PC-3 (cell line): ENCODE measurements at regions of chr17 and their contacts with region 1.

Region 1: DNA sequence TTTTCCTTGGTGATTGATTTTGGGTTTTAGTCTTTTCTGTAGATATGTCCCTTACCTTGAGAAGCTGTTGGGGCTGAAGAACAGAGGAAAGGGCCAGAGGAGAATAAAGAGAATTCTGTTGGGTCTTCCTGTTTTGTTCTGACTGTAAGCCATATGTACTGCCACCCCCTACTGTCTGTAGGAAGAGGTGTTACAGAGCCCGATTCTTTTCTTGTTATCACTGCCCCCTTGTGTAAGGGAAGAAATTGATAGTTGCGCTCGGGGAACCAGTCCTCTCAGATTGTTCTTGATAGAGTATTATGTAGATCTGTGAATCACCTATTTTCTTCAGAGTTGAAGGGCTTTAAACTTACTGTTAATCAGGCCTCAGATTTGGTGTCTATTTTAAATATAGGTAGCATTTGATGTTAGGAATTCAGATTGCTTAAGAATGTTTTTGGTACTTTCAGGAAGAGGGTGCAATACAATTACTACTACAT is 2.4 kb downstream of the TANC2 start:
- DNase-seq: peak; percentile 96
- ATAC-seq: peak; percentile 62
- H3K4me3 ChIP-seq: peak overlapping the region; percentile 88
- H3K27ac ChIP-seq: no peak overlapping the region
- H3K4me1 ChIP-seq: peaks cover 45% of the 10 kb centered on the region
- H3K27me3 ChIP-seq: no peaks in the 10 kb centered on the region
- CTCF ChIP-seq: peak; percentile 100

Region 2: DNA sequence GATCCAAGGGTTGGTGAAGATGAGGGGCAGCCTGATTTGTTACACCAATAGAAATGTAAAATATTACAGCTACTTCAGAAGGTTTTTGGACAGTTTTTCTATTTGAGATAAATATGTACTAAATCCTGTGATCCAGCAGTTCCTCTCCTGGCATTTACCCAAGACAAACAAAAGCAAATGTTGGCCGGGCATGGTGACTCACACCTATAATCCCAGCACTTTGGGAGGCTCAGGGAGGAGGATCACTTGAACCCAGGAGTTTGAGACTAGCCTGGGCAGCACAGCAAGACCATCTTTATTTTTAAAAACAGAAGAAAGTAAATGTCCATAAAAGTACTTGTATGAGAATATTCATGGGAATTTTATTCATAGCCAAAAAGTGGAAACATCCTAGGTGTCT is 405.8 kb before region 1 on chr17:
- CTCF ChIA-PET with region 1: no interaction called
- POLR2A ChIA-PET with region 1: interaction called, 3 read pairs
- intact Hi-C with region 1: loop called (anchors 10 kb)
- DNase-seq: peak; percentile 90
- ATAC-seq: peak; percentile 7; the same call in 1 of the 2 replicates
- H3K4me3 ChIP-seq: no peak overlapping the region
- H3K27ac ChIP-seq: peak overlapping the region; percentile 64
- H3K4me1 ChIP-seq: peaks cover 64% of the 10 kb centered on the region
- H3K27me3 ChIP-seq: no peaks in the 10 kb centered on the region
- CTCF ChIP-seq: no peak

Region 3: DNA sequence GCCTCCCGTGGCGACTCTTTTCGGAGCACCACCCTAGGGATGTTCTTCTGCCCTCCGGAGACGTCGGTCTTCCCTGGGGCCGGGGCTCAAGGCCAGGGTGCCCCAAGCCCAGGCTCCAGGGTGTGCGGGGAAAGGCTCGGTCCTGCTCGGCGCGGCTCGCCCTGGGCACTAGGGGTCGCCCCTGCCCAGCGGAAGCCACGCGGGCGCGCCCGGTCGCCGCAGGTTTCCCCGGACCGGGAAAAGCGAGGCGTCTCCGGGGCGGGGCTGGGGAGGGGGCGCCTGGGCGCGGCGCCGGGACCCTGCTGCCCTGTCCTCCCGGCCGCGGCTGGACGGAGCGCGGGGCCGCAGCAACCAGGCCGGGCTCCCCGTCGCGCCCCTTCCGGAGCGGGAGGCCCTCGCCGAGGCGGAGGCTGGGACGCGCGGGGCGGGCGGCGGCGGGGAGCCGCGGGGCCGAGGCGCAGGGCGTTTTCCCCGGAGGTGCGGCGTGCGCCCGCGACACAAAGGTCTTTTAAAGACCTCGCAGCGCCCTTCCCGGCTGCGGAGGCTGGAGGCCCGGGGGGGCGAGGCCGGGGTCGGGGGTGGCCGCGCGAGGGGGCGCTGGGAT is 264.6 kb before region 1 on chr17:
- CTCF ChIA-PET with region 1: interaction called, 6 read pairs
- POLR2A ChIA-PET with region 1: interaction called, 3 read pairs
- intact Hi-C with region 1: loop called (anchors 1 kb)
- DNase-seq: peak; percentile 90
- ATAC-seq: peak; percentile 78
- H3K4me3 ChIP-seq: peak overlapping the region; percentile 73
- H3K27ac ChIP-seq: peak overlapping the region; percentile 84
- H3K4me1 ChIP-seq: peaks cover 29% of the 10 kb centered on the region
- H3K27me3 ChIP-seq: no peaks in the 10 kb centered on the region
- CTCF ChIP-seq: peak; percentile 82

Region 4: DNA sequence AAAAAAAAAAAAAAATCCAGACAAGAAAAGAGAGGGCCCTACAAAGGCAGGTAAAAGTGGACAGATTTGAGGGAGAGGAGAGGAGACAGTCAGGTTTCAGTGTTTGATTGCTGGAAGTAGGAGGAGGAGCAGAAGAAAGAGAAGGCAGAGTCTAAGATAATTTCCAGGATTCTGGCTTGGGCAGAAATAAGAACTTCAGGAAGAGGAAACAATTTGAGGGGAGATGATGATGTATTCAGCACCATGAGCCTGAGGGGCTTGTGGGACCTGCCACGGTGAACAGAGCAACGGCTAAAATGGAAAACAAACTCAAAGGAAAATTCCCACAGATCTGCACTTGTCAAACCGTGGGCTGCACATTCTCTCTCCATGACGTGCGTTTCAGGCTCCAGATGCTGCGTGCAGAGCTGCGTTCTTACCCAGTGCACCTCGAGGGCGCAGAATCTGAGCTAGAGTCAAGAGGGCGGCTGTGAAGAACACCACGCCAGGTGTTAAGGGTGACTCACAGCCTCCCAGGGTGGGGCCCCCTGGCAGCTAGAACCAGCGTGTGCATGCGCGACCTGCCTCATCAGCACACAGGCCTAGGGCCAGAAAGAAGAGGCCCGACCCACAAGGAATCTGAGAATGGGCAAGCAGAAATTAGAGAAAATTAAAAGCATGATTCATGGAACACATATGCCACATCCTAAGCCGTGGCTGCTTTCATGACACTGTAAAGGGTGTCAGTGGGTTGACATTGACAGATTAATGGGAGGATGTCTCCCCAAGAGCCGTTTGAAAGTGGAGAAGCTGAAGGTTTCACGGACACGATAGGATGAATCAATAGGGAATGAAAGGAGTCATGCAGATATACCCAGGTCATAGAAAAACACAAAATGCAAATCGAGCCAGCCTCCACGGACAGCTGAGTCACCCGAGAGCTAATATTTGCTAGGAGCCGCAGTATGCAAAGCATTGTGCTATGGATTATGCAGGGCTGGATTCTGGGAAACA is 189.5 kb before region 1 on chr17:
- CTCF ChIA-PET with region 1: no interaction called
- POLR2A ChIA-PET with region 1: interaction called, 3 read pairs
- intact Hi-C with region 1: loop called (anchors 1 kb)
- DNase-seq: peak; percentile 98
- ATAC-seq: peak; percentile 88
- H3K4me3 ChIP-seq: peak overlapping the region; percentile 39
- H3K27ac ChIP-seq: peak overlapping the region; percentile 92
- H3K4me1 ChIP-seq: peaks cover 47% of the 10 kb centered on the region
- H3K27me3 ChIP-seq: no peaks in the 10 kb centered on the region
- CTCF ChIP-seq: no peak

Region 5: GRCh38 chr17:62819475-62820212 is 148.8 kb before region 1 on chr17:
- CTCF ChIA-PET with region 1: no interaction called
- POLR2A ChIA-PET with region 1: no interaction called
- intact Hi-C with region 1: loop called (anchors 1 kb)
- DNase-seq: peak; percentile 98
- ATAC-seq: peak; percentile 95
- H3K4me3 ChIP-seq: peak overlapping the region; percentile 47
- H3K27ac ChIP-seq: peak overlapping the region; percentile 56
- H3K4me1 ChIP-seq: peaks cover 40% of the 10 kb centered on the region
- H3K27me3 ChIP-seq: no peaks in the 10 kb centered on the region
- CTCF ChIP-seq: peak; percentile 32; the same call in 1 of the 2 replicates

Region 6: DNA sequence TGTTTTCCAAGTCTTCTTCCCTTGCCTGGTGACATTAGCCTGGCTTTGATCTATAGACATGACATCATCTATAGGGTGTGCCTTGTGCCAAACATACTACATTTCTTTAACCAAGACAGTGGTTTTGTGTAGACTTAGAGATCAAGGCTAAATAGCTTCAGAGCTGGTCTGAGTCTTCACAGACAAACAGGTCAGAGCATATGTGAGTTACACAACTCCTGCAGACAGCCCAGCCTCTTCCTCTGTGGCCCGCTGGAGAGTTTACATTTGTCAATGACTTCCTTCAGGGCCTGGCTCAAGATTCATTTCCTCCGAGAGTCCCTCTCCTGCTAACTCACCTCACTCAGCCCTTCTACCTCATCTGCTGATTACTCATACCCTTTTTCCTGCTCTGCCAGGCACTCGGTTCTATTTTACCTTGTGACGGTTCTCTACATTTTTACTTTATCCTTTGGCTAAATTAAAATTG is 75.6 kb before region 1 on chr17:
- CTCF ChIA-PET with region 1: no interaction called
- POLR2A ChIA-PET with region 1: no interaction called
- intact Hi-C with region 1: loop called (anchors 1 kb)
- DNase-seq: peak; percentile 99
- ATAC-seq: peak; percentile 94
- H3K4me3 ChIP-seq: no peak overlapping the region; the same call in 1 of the 2 replicates
- H3K27ac ChIP-seq: peak overlapping the region; percentile 79
- H3K4me1 ChIP-seq: peaks cover 43% of the 10 kb centered on the region
- H3K27me3 ChIP-seq: no peaks in the 10 kb centered on the region
- CTCF ChIP-seq: no peak

Region 7: DNA sequence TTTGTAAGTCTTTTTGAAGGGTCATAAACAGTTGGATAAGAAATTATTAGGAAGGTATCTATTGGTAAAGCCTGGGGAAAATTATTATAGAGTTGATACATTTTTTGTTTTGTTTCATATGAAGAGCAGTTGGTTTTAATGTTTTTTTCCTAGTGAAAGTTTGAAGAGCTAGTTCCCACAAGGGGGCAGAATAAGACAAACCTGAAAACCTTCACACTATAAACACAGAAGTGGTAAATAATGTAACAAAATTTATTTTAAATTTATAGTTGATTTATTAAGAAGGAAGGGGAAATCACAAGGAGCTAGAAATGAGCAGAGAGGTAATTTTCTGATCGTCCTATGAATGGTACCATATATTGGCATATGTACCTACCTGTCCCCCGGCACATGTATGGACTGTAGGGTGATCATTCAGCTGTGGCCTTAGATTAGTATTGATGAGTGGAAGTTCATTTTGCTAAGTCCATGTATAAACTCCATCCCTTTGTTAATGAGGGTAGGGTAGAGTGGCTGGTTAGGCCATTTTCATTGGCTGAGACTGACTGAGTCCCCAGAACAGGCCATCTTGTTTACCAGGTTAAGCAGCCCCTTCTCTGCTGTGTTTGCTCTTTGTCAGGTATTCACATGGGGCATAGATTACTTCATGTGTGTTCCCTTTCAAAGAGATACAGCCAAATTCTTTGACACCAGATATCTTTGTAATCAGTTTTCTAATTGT is 113.9 kb after region 1 on chr17:
- CTCF ChIA-PET with region 1: no interaction called
- POLR2A ChIA-PET with region 1: no interaction called
- intact Hi-C with region 1: no loop called
- DNase-seq: peak; percentile 58
- ATAC-seq: peak; percentile 28; the same call in 1 of the 2 replicates
- H3K4me3 ChIP-seq: no peak overlapping the region
- H3K27ac ChIP-seq: no peak overlapping the region
- H3K4me1 ChIP-seq: peaks cover 4% of the 10 kb centered on the region; the same call in 1 of the 2 replicates
- H3K27me3 ChIP-seq: no peaks in the 10 kb centered on the region
- CTCF ChIP-seq: peak; percentile 77